AG04449 (cell line): ENCODE measurements at regions of chr20 and their contacts with region 1.

Region 1: DNA sequence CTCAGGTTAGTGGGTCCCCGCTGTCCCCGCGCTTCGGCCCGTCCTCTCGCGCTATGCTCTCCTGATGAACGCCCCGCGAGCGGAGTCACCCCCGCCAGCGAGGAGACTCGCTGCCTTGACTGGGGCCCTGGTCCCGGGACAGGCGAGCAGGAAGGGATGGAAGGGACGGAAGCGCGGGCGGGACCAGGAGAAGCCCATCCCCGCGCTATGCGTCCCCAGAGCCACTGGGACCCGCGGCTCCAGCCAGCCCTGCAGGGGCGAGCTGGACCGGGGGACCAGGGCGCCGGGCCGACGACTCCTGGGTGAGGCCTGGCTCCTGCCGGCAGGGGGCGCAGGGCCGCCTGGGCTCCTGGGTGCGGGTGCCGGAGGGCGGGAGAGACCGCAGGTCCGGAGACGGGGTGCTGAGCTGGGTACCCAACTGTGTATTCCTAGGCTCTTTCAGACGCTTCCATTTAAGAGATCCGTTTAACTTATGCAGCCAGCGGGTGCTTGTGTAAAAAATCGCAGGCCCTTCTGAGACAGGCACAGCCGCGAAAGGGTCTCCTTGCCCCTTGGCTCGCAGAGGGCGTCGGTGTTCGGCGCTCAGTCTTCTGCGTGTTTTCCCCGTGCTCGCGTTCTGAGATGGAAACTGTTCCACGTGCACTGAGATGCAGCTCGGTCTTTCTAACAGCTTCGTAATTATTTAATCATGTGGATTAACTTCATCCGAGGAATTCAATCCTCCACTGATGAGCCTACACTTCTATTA is 586 bp upstream of the SYCP2 start:
- DNase-seq: no peak
- H3K4me3 ChIP-seq: peak overlapping the region; percentile 68
- CTCF ChIP-seq: peak; percentile 95

Region 2: DNA sequence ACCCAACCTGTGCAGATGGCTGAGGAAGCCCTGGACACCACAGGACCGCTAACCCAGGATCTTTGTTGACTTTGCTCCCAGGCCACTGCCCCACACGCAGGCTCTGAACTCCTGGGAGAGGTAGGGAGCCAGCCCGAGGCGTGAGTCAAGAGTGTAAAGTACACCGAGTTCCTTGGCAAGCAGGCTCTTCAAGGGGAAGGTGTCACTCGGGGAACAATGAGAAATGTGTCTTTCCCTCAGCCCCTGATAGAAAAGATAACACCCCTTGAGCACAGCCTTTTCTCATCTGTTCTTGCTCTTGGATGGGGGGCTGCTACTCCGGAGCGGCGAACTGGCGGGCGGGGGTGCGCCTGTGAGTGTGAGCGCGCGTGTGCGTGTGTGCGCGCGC is 634.1 kb before region 1 on chr20:
- CTCF ChIA-PET with region 1: no interaction called
- POLR2A ChIA-PET with region 1: no interaction called
- DNase-seq: no peak
- H3K4me3 ChIP-seq: no peak overlapping the region
- CTCF ChIP-seq: no peak

Region 3: DNA sequence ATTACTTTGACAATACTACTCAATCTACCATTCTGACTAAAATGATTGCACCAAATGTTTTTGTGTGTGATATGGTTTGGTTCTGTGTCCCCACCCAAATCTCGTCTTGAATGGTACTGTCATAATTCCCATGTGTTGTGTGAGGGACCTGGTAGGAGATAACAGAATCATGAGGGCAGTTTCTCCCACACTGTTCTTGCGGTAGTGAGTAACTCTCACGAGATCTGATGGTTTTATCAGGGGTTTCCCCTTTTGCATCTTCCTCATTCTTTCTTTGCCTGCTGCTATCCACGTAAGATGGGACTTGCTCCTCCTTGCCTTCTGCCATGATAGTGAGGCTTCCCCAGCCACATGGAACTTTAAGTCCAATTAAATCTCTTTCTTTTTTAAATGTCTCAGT is 21.4 kb before region 1 on chr20:
- CTCF ChIA-PET with region 1: interaction called, 16 read pairs
- POLR2A ChIA-PET with region 1: no interaction called
- DNase-seq: no peak
- H3K4me3 ChIP-seq: no peak overlapping the region
- CTCF ChIP-seq: no peak

Region 4: GRCh38 chr20:59948828-59949720 is 15.1 kb after region 1 on chr20:
- CTCF ChIA-PET with region 1: interaction called, 52 read pairs
- POLR2A ChIA-PET with region 1: no interaction called
- DNase-seq: no peak
- H3K4me3 ChIP-seq: no peak overlapping the region
- CTCF ChIP-seq: peak; percentile 44

Region 5: DNA sequence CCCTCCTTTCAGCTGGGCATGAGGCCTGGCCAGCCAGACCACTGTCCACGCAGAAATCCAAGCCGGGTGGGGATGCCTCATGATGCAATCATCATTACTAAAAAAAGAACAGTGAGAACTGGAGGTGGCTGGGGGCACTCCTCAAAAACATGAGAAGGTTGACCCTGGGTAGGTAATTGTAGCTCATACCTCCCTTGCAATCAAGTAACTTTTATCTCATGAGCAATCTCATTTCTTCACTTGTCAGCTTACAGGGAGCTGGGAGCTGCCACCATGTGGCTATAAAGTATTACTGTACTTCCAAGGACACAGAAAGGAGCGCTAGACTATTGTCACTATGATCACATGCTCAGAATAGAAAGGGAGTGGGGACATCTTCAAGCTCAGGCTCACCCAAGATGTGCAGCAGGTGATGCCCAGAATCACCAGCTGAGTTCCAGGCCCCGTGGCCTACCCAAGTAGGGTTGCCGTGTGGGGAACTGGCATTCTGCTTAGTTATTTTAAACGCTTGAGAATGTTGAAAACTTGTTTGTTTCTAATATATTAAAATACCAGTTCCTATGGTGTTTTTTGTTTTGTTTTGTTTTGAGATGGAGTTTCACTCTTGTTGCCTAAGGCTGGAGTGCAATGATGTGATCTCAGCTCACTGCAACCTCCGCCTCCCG is 21.2 kb after region 1 on chr20:
- CTCF ChIA-PET with region 1: interaction called, 30 read pairs
- POLR2A ChIA-PET with region 1: no interaction called
- DNase-seq: no peak
- H3K4me3 ChIP-seq: no peak overlapping the region
- CTCF ChIP-seq: peak; percentile 16